Spleen (tissue), 13 donors: ENCODE measurements at regions of chr18 and their contacts with region 1.

Region 1: GRCh38 chr18:74353169-74353775 is 37.6 kb downstream of the C18orf63 start:
- DNase-seq: no peak
- H3K4me3 ChIP-seq: no peak overlapping the region
- H3K27ac ChIP-seq: no peak overlapping the region
- H3K4me1 ChIP-seq: peaks cover 0 to 24% (median 11%) of the 10 kb centered on the region in 6 donors
- H3K27me3 ChIP-seq: no peaks in the 10 kb centered on the region
- CTCF ChIP-seq: peak in 10 of 11 experiments; percentile 38 to 73 (median 62)
- POLR2A ChIP-seq: no peak

Region 2: DNA sequence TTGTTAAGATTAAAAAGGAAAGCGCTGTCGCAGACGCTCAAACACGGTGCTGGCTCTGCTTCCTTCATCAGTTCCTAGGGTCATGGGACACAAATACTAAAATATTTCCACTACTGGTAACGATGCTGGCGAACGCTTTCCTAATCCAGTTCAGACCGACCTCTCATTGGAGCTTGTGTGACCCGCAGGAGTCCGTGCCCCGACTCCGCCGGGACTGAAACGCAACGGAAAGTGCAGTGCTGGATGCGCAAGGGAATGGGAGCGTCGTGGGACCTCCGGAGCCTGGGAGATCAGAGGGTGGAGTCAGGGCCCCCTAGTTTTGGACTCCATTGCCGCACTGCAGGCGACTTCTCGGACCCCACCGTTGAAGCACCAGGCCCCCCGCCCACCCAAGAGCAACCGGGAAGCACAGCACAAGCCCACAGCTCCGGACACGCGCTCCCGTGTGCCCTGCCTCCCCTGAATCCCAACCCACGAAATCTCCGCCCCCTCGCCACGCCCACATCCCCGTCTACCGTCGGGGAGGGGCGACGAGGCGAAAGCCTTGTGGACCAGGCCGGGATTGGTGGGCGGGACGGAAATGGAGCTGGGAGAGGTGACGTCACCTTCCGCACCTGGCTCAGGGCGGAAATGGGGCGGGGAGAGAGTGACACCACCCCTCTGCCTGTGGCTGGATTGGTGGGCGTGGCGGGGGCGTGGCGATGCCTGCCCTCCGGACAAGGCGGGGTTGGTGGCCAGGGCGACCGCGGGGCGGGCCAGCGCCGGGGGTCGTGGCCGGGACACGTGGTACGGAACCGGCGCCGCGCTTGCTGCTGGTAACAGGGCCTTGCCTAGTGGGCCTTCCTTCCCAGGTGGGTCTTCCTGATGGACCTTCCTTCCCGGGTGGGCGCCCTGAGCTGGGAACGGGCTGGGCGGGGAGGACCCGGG is 142.6 kb after region 1 on chr18 and contains the start of gene CNDP2:
- intact Hi-C with region 1: loop called (anchors 5 kb)
- DNase-seq: peak; percentile 100
- H3K4me3 ChIP-seq: peak within 1 kb of the TSS; percentile 77 to 93 (median 90)
- H3K27ac ChIP-seq: peak within 1 kb of the TSS; percentile 86 to 97 (median 94)
- H3K4me1 ChIP-seq: peaks cover 22 to 54% (median 45%) of the 10 kb centered on the region in 6 donors
- H3K27me3 ChIP-seq: no peaks in the 10 kb centered on the region
- CTCF ChIP-seq: peak in 2 of 11 experiments; percentile 2 to 26
- POLR2A ChIP-seq: peak in 2 of 3 donors; percentile 48 to 69
- total RNA-seq, gene CNDP2: 219 to 310 (median 291) TPM